ENCODE measurements at regions of chr11 and their contacts with region 1.

Region 1: DNA sequence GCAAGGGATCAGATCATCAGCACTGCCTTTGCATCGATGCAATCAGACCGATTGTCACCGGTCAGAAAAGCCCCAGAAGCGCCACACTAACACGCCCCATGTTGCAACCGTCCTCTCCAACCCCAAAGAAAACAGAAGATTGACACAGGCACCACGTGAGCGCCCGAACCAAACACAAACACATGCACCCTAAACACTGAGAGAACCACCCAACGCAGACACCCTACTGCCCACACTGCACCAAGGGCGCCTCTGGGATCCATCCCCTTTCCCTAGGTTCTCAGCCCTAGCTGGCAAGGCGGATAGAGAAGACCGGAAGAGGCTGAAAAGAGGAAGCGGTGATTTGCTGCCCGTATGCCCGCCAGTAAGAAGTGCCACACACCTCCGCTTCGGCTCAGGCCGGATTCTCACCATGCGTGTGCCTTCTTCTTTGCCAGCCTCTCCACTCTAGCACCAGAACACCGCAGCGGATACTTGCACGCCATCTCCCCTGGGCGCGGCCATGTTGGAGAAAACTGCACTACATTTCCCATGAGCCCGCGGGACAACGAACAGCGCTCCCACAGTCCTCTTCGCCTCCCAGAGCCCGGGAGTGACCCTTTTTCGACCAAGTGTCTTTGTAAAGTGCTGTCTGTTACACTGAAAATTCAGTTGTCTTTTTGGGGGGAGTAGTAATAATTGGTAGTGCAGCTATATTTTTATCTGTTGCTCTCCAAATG is at the start of gene ALKBH8:
- DNase-seq: peak; percentile 50 to 77 (median 75)
- ATAC-seq: peak; percentile 96
- H3K4me3 ChIP-seq: peak within 1 kb of the TSS; percentile 98
- H3K4me3 Mint-ChIP-seq: peak within 1 kb of the TSS; percentile 87 to 98 (median 94)
- H3K27ac ChIP-seq: peak within 1 kb of the TSS; percentile 73
- H3K27ac Mint-ChIP-seq: peak within 1 kb of the TSS; percentile 87 to 97 (median 90)
- H3K4me1 ChIP-seq: peaks cover 8 to 20% of the 10 kb centered on the region in 2 donors
- H3K4me1 Mint-ChIP-seq: peaks cover 28 to 70% (median 58%) of the 10 kb centered on the region in 7 donors
- H3K27me3 ChIP-seq: no peaks in the 10 kb centered on the region
- H3K27me3 Mint-ChIP-seq: peaks cover 0 to 3% (median 0%) of the 10 kb centered on the region in 5 donors
- total RNA-seq, gene ALKBH8: 9.5 to 19.1 (median 12.6) TPM

Region 2: DNA sequence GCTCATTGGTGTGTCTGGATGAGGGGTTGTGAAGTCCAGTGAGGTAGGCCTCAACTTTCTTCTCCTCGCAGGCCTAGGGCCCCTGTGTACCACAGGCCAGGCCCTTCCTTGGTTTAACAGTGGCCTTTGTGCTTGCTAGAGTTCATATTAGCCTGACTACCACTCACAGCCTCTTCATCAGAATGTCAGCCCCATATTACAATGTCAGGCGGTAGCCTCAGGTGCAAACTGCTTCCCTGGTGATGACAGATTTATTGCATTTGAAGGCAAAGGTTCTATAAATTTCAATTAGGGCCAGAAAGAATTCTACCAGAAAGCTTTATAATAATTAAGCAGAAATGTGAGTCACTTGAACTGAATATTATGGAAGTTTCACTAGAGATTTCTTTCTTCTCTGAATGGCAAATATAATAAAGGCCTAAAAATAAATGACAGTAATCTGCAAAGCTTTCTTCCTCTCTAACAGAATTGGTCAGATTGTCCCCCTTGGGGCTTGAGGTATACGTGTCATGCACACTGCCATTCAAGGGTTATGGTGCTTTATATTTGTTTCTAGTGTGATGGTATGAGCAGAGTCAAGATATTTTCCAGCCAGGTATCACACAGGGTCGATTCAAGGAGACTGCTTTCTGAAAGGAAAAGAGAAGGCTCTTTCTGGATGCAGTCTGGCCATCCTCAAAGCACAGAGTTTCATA is 318.1 kb before region 1 on chr11:
- CTCF ChIA-PET with region 1: no interaction called
- POLR2A ChIA-PET with region 1: no interaction called
- intact Hi-C with region 1: no loop called
- DNase-seq: no peak
- ATAC-seq: no peak
- H3K4me3 ChIP-seq: no peak overlapping the region
- H3K4me3 Mint-ChIP-seq: no peak overlapping the region
- H3K27ac ChIP-seq: no peak overlapping the region
- H3K27ac Mint-ChIP-seq: no peak overlapping the region
- H3K4me1 ChIP-seq: no peaks in the 10 kb centered on the region
- H3K4me1 Mint-ChIP-seq: no peaks in the 10 kb centered on the region
- H3K27me3 ChIP-seq: no peaks in the 10 kb centered on the region
- H3K27me3 Mint-ChIP-seq: peaks cover 0 to 5% (median 0%) of the 10 kb centered on the region in 5 donors

Region 3: GRCh38 chr11:107457558-107458271 is 107.7 kb before region 1 on chr11 and contains the start of gene CWF19L2:
- CTCF ChIA-PET with region 1: interaction called, 3 read pairs
- POLR2A ChIA-PET with region 1: interaction called, 23 read pairs
- intact Hi-C with region 1: loop called (anchors 1 kb)
- DNase-seq: peak; percentile 62 to 94 (median 92)
- ATAC-seq: peak; percentile 99
- H3K4me3 ChIP-seq: peak within 1 kb of the TSS; percentile 91
- H3K4me3 Mint-ChIP-seq: peak within 1 kb of the TSS; percentile 84 to 100 (median 93)
- H3K27ac ChIP-seq: peak within 1 kb of the TSS; percentile 82
- H3K27ac Mint-ChIP-seq: peak within 1 kb of the TSS; percentile 87 to 98 (median 96)
- H3K4me1 ChIP-seq: peaks cover 7 to 13% of the 10 kb centered on the region in 2 donors
- H3K4me1 Mint-ChIP-seq: peaks cover 19 to 50% (median 32%) of the 10 kb centered on the region in 7 donors
- H3K27me3 ChIP-seq: no peaks in the 10 kb centered on the region
- H3K27me3 Mint-ChIP-seq: peaks cover 0 to 10% (median 0%) of the 10 kb centered on the region in 5 donors
- total RNA-seq, gene CWF19L2: 17.0 to 38.9 (median 27.2) TPM

Region 4: GRCh38 chr11:107689317-107690202 is 124.2 kb after region 1 on chr11:
- CTCF ChIA-PET with region 1: interaction called, 40 read pairs
- POLR2A ChIA-PET with region 1: no interaction called
- intact Hi-C with region 1: loop called (anchors 1 kb)
- DNase-seq: peak; percentile 7 to 51 (median 45)
- ATAC-seq: peak; percentile 84
- H3K4me3 ChIP-seq: no peak overlapping the region
- H3K4me3 Mint-ChIP-seq: no peak overlapping the region
- H3K27ac ChIP-seq: no peak overlapping the region
- H3K27ac Mint-ChIP-seq: no peak overlapping the region
- H3K4me1 ChIP-seq: no peaks in the 10 kb centered on the region
- H3K4me1 Mint-ChIP-seq: peaks cover 0 to 5% (median 0%) of the 10 kb centered on the region in 7 donors
- H3K27me3 ChIP-seq: no peaks in the 10 kb centered on the region
- H3K27me3 Mint-ChIP-seq: peaks cover 12 to 26% (median 20%) of the 10 kb centered on the region in 5 donors

Region 5: GRCh38 chr11:107801641-107802040 is 236.3 kb after region 1 on chr11:
- CTCF ChIA-PET with region 1: no interaction called
- POLR2A ChIA-PET with region 1: no interaction called
- intact Hi-C with region 1: no loop called
- DNase-seq: no peak
- ATAC-seq: no peak
- H3K4me3 ChIP-seq: no peak overlapping the region
- H3K4me3 Mint-ChIP-seq: no peak overlapping the region
- H3K27ac ChIP-seq: no peak overlapping the region
- H3K27ac Mint-ChIP-seq: no peak overlapping the region
- H3K4me1 ChIP-seq: no peaks in the 10 kb centered on the region
- H3K4me1 Mint-ChIP-seq: peaks cover 0 to 3% (median 0%) of the 10 kb centered on the region in 7 donors
- H3K27me3 ChIP-seq: no peaks in the 10 kb centered on the region
- H3K27me3 Mint-ChIP-seq: no peaks in the 10 kb centered on the region

Region 6: GRCh38 chr11:107898270-107898669 is 332.9 kb after region 1 on chr11:
- CTCF ChIA-PET with region 1: no interaction called
- POLR2A ChIA-PET with region 1: no interaction called
- intact Hi-C with region 1: loop called in 1 of 2 experiments (anchors 1 kb)
- DNase-seq: peak in 2 of 9 donors; percentile 3 to 9
- ATAC-seq: peak; percentile 76
- H3K4me3 ChIP-seq: no peak overlapping the region
- H3K4me3 Mint-ChIP-seq: no peak overlapping the region
- H3K27ac ChIP-seq: no peak overlapping the region
- H3K27ac Mint-ChIP-seq: no peak overlapping the region
- H3K4me1 ChIP-seq: no peaks in the 10 kb centered on the region
- H3K4me1 Mint-ChIP-seq: no peaks in the 10 kb centered on the region
- H3K27me3 ChIP-seq: no peaks in the 10 kb centered on the region
- H3K27me3 Mint-ChIP-seq: peaks cover 0 to 11% (median 9%) of the 10 kb centered on the region in 5 donors

Region 7: GRCh38 chr11:108121274-108122155 is 556.1 kb after region 1 on chr11 and contains the start of gene ACAT1:
- CTCF ChIA-PET with region 1: no interaction called
- POLR2A ChIA-PET with region 1: no interaction called
- intact Hi-C with region 1: loop called (anchors 5 to 10 kb)
- DNase-seq: peak; percentile 91 to 98 (median 94)
- ATAC-seq: peak; percentile 100
- H3K4me3 ChIP-seq: peak within 1 kb of the TSS; percentile 88
- H3K4me3 Mint-ChIP-seq: peak within 1 kb of the TSS; percentile 81 to 97 (median 94)
- H3K27ac ChIP-seq: peak within 1 kb of the TSS; percentile 66
- H3K27ac Mint-ChIP-seq: peak within 1 kb of the TSS; percentile 61 to 93 (median 85)
- H3K4me1 ChIP-seq: peaks cover 16 to 20% of the 10 kb centered on the region in 2 donors
- H3K4me1 Mint-ChIP-seq: peaks cover 35 to 49% (median 41%) of the 10 kb centered on the region in 7 donors
- H3K27me3 ChIP-seq: no peaks in the 10 kb centered on the region
- H3K27me3 Mint-ChIP-seq: no peaks in the 10 kb centered on the region
- total RNA-seq, gene ACAT1: 13.0 to 40.2 (median 17.9) TPM

Region 8: DNA sequence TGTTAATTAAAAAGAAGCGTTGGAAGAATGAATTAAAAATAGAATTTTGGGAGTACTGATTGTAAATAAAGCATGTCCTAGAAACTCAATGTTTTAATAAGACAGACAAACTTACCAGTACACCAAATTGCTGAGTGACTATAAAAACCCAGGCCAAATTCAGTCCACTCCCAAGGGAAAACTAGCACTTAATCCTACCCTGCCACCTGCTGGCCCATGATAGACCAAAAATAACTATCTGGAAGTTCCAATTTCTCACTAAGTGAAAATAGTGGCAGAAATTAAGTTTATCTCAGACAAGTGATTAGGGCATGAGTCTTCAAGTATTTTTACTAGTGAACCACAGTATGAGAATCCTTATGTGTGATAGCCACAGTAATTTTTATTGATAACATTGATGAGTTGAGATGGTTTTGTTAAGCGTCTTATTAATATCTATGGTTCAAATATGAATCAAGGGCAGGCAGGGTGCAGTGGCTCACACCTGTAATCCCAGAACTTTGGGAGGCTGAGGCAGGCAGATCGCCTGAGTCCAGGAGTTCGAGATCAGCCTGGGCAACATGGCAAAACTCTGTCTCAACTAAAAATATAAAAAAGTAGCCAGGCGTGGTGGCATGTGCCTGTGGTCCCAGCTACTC is 1089.7 kb after region 1 on chr11:
- CTCF ChIA-PET with region 1: no interaction called
- POLR2A ChIA-PET with region 1: no interaction called
- intact Hi-C with region 1: loop called in 1 of 2 experiments (anchors 5 kb)
- DNase-seq: peak in 5 of 9 donors; percentile 5 to 31 (median 13)
- ATAC-seq: no peak
- H3K4me3 ChIP-seq: no peak overlapping the region
- H3K4me3 Mint-ChIP-seq: no peak overlapping the region
- H3K27ac ChIP-seq: no peak overlapping the region
- H3K27ac Mint-ChIP-seq: no peak overlapping the region
- H3K4me1 ChIP-seq: no peaks in the 10 kb centered on the region
- H3K4me1 Mint-ChIP-seq: peaks cover 0 to 5% (median 0%) of the 10 kb centered on the region in 7 donors
- H3K27me3 ChIP-seq: no peaks in the 10 kb centered on the region
- H3K27me3 Mint-ChIP-seq: peaks cover 0 to 26% (median 0%) of the 10 kb centered on the region in 5 donors

Measured in naive thymus-derived CD4-positive, alpha-beta T cell (primary cell).